Activated CD8-positive, alpha-beta T cell treated with anti-CD3 and anti-CD28 coated beads for 36 hours (primary cell): ENCODE measurements at regions of chr15 and their contacts with region 1.

Region 1: DNA sequence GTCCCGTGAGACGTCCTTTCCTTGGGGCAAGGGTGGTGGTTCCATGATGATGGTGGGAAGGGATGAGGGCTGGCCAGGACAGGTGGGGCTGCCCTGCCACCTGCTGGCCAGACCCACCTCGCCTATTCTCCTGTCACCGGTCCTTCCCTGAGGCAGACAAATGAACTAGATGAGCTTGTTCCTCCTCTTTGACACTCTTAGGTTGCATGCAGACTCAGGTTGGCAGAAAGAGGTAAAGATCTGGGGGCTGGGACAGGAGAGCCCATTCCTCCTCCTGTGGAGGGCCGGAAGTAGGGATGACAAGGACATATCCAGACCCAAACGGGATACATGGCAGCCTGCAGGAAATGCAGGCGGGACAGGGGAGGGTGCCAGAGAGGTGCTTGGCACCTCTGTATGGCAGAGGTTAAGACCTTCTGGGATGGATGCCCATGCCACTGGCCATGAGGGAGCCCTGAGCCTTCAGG is 38.6 kb downstream of the ACSBG1 start:
- DNase-seq: peak; percentile 52
- ATAC-seq: peak; percentile 94
- H3K4me3 Mint-ChIP-seq: no peak overlapping the region
- H3K27ac Mint-ChIP-seq: no peak overlapping the region
- H3K4me1 Mint-ChIP-seq: no peaks in the 10 kb centered on the region
- H3K27me3 Mint-ChIP-seq: no peaks in the 10 kb centered on the region
- CTCF ChIP-seq: peak; percentile 89

Region 2: DNA sequence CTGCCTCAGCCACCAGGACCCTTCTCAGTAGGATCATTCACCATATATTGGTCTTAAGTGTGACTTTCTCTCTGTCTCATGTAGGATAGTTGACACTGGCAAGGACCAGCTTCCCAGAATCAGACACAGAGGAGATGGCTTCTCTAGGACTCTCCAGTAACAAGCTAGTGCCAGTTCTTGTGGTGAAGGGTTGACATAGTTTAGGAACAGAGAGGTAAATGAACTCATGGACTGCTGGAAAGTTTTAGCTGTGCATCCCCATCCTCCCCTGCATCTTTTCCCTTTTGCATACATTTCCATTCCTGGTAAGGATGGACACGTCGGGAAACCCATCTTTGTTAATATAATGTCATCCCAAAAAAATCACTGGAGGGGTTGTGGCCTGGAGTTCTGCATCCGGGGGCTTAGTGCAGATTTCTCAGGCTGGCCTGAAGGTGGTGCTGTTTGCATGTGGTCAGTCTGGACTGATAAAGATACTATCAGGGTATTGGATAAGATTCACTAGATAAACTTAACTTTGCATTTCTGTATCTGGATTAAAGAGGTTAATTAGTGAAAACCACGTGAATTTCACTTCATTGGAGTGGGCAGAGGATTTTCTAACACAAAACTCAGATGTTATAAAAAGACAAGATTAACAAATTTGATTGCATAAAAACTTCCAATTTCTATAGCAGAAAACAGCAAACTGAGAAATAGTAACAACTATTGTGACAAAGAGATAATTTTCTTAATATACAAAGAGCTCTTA is 229.1 kb before region 1 on chr15:
- CTCF ChIA-PET with region 1: interaction called, 28 read pairs
- POLR2A ChIA-PET with region 1: no interaction called
- intact Hi-C with region 1: loop called (anchors 5 kb)
- DNase-seq: peak; percentile 45
- ATAC-seq: no peak
- H3K4me3 Mint-ChIP-seq: no peak overlapping the region
- H3K27ac Mint-ChIP-seq: no peak overlapping the region
- H3K4me1 Mint-ChIP-seq: no peaks in the 10 kb centered on the region
- H3K27me3 Mint-ChIP-seq: no peaks in the 10 kb centered on the region
- CTCF ChIP-seq: peak; percentile 90

Region 3: GRCh38 chr15:78131295-78132061 is 64.3 kb before region 1 on chr15 and contains the start of gene CIB2:
- CTCF ChIA-PET with region 1: interaction called, 63 read pairs
- POLR2A ChIA-PET with region 1: interaction called, 3 read pairs
- intact Hi-C with region 1: no loop called
- DNase-seq: peak; percentile 78
- ATAC-seq: peak; percentile 94
- H3K4me3 Mint-ChIP-seq: peak within 1 kb of the TSS; percentile 79
- H3K27ac Mint-ChIP-seq: peak within 1 kb of the TSS; percentile 60
- H3K4me1 Mint-ChIP-seq: peaks cover 22% of the 10 kb centered on the region
- H3K27me3 Mint-ChIP-seq: peaks cover 1% of the 10 kb centered on the region
- CTCF ChIP-seq: peak; percentile 89
- total RNA-seq, gene CIB2: 1.6 TPM

Region 4: GRCh38 chr15:78149068-78149804 is 46.5 kb before region 1 on chr15 and contains the start of gene IDH3A:
- CTCF ChIA-PET with region 1: interaction called, 12 read pairs
- POLR2A ChIA-PET with region 1: no interaction called
- intact Hi-C with region 1: no loop called
- DNase-seq: peak; percentile 100
- ATAC-seq: peak; percentile 98
- H3K4me3 Mint-ChIP-seq: peak within 1 kb of the TSS; percentile 96
- H3K27ac Mint-ChIP-seq: peak within 1 kb of the TSS; percentile 93
- H3K4me1 Mint-ChIP-seq: peaks cover 39% of the 10 kb centered on the region
- H3K27me3 Mint-ChIP-seq: no peaks in the 10 kb centered on the region
- CTCF ChIP-seq: no peak
- total RNA-seq, gene IDH3A: 106 to 110 TPM

Region 5: DNA sequence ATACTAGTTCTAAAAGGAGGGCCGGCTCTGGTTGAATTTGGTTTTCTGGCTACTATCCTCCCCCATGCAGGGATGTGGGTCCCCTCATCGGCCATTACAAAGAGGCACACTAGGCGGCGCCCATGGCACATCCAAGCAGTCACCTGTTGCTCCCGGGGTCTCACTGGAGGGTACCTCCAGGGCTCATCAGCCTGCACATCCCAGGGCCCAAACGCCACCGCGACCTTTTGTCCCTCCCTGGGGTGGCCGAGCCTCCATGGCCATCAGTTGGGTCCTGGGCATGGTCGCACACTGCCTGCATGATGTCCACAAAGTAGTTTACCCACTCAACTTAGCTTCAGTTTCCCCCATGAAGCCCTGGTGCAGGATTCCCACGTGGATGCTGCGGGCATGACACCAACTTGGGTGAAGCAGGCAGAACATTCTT is 18.3 kb before region 1 on chr15:
- CTCF ChIA-PET with region 1: interaction called, 29 read pairs
- POLR2A ChIA-PET with region 1: no interaction called
- intact Hi-C with region 1: no loop called
- DNase-seq: peak; percentile 64
- ATAC-seq: peak; percentile 60
- H3K4me3 Mint-ChIP-seq: no peak overlapping the region
- H3K27ac Mint-ChIP-seq: no peak overlapping the region
- H3K4me1 Mint-ChIP-seq: peaks cover 19% of the 10 kb centered on the region
- H3K27me3 Mint-ChIP-seq: no peaks in the 10 kb centered on the region
- CTCF ChIP-seq: peak; percentile 62

Region 6: GRCh38 chr15:78225783-78226541 is 30.2 kb after region 1 on chr15:
- CTCF ChIA-PET with region 1: interaction called, 14 read pairs
- POLR2A ChIA-PET with region 1: no interaction called
- intact Hi-C with region 1: no loop called
- DNase-seq: no peak
- ATAC-seq: peak; percentile 78
- H3K4me3 Mint-ChIP-seq: no peak overlapping the region
- H3K27ac Mint-ChIP-seq: no peak overlapping the region
- H3K4me1 Mint-ChIP-seq: peaks cover 7% of the 10 kb centered on the region
- H3K27me3 Mint-ChIP-seq: no peaks in the 10 kb centered on the region
- CTCF ChIP-seq: no peak